ENCODE measurements at regions of chr3 and their contacts with region 1.

Region 1: DNA sequence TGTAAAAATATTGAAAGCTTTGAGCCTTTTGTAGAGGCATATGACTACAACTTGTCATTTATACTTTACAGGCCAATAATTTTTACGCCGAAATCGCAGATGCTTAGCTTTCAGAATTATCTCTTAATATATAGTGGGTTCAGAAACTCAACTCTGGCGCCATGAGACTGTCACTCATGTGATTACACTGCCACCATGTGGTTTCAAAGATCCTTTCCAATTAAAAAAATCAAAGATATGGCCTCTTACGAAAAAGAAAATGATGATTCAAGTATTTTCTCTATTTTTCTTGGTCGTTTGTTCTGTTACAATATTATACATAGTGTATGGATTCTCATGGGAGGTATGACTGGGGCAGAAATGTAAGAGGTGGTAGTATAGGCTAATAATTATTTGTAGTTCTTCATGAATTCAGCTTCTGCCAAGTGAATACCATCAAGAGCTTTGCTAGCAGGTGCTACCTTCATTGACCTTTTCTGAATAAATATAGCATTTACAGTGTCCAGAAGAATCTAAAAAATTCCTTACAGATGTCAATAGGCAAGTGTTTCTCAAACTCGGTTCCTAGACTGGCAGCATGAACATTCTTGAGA is 751.7 kb upstream of the GOLIM4 start:
- DNase-seq: no peak
- ATAC-seq: peak; percentile 62
- H3K4me3 ChIP-seq: no peak overlapping the region
- H3K27ac ChIP-seq: no peak overlapping the region
- H3K4me1 ChIP-seq: no peaks in the 10 kb centered on the region
- H3K27me3 ChIP-seq: peaks cover 6% of the 10 kb centered on the region; the same call in 1 of the 2 replicates
- CTCF ChIP-seq: peak; percentile 68; the same call in 1 of the 2 replicates

Region 2: DNA sequence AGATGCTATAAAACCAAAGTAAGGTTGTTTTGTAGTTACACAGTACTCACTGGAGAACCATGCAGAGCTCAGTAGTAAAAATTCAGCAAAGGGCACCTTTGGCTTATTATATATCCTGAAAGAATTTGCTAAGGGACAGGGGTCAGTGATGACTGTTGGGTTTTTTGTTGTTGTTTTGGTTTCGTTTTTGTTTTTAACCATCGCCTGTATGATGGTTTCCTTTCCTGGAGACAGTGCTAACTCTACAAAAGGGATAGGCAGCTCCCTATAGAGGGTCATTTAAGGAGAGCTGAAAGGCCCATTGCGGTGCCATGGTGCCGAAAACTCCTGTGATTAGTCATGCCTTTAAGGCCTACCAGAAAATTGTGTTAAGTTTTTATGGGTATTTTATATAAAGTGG is 633.5 kb before region 1 on chr3:
- CTCF ChIA-PET with region 1: interaction called, 8 read pairs
- POLR2A ChIA-PET with region 1: no interaction called
- in situ Hi-C with region 1: no loop called
- intact Hi-C with region 1: loop called (anchors 1 kb)
- DNase-seq: no peak
- ATAC-seq: peak; percentile 65; the same call in 1 of the 2 replicates
- H3K4me3 ChIP-seq: peak overlapping the region in 1 of 2 experiments; percentile 7; a peak in 1 of 4 replicates
- H3K27ac ChIP-seq: no peak overlapping the region
- H3K4me1 ChIP-seq: no peaks in the 10 kb centered on the region; the same call in 1 of the 2 replicates
- H3K27me3 ChIP-seq: no peaks in the 10 kb centered on the region
- CTCF ChIP-seq: no peak

Region 3: GRCh38 chr3:168511428-168512014 is 335.9 kb before region 1 on chr3:
- CTCF ChIA-PET with region 1: no interaction called
- POLR2A ChIA-PET with region 1: no interaction called
- in situ Hi-C with region 1: no loop called
- intact Hi-C with region 1: loop called (anchors 1 kb)
- DNase-seq: peak; percentile 8
- ATAC-seq: no peak
- H3K4me3 ChIP-seq: no peak overlapping the region
- H3K27ac ChIP-seq: no peak overlapping the region
- H3K4me1 ChIP-seq: no peaks in the 10 kb centered on the region
- H3K27me3 ChIP-seq: no peaks in the 10 kb centered on the region
- CTCF ChIP-seq: peak; percentile 44; the same call in 1 of the 2 replicates

Region 4: DNA sequence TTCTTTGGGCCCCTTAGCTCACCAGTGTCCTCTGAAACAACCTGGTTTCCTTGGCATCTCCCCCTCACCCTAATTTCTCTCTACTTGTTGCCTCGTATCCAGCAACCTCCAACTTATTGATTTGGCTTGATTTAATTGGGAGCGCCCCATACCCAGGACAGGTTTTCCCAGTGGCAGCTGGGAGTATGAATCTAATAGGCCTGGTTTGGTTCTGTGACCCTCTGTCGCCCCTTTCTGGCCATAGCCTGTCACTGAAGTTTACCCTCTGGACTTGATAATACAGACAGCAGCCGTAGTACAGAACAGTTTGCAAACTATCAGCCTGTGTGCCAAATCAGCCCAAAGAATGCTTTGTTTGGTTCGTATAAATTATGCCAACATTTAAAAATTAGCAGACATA is 226.6 kb before region 1 on chr3:
- CTCF ChIA-PET with region 1: no interaction called
- POLR2A ChIA-PET with region 1: no interaction called
- in situ Hi-C with region 1: no loop called
- intact Hi-C with region 1: loop called (anchors 10 kb)
- DNase-seq: peak; percentile 7
- ATAC-seq: peak; percentile 65; the same call in 1 of the 2 replicates
- H3K4me3 ChIP-seq: no peak overlapping the region
- H3K27ac ChIP-seq: no peak overlapping the region
- H3K4me1 ChIP-seq: no peaks in the 10 kb centered on the region
- H3K27me3 ChIP-seq: no peaks in the 10 kb centered on the region
- CTCF ChIP-seq: peak; percentile 64